Gastrocnemius medialis (tissue), 4 donors: ENCODE measurements at regions of chr3 and their contacts with region 1.

Region 1: DNA sequence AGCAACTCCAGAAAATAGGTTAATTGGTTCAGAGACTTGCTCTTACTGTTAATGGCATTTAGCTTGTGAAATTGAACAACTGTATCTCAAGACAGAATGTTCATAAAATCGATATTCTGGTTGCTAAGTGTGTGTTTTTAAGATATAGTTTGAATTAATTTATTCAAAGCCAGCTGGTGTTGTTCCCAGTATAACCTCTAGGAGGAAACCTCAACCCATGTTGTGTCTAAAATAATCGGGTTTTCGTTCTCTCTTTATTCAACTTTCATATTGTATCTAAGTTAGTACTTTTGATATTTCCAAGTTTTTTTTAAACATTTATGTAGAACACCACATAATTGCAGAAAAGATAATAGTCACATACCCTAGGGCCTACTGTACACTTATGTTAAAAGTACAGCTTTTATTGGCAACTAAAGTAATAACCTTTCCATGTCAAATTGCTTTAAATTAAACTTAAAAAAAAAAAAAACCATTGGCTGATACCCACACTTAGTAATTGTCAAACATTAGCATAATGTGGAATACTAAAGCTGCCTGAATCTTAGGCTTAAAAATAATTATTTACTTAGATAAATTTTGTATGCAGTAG is 90.9 kb downstream of the SAMMSON start:
- DNase-seq: no peak
- ATAC-seq: no peak
- H3K4me3 ChIP-seq: no peak overlapping the region
- H3K27ac ChIP-seq: no peak overlapping the region
- H3K4me1 ChIP-seq: no peaks in the 10 kb centered on the region
- H3K27me3 ChIP-seq: no peaks in the 10 kb centered on the region
- CTCF ChIP-seq: peak in 2 of 5 experiments; percentile 13 to 44
- POLR2A ChIP-seq: no peak

Region 2: GRCh38 chr3:70358978-70359580 is 268.7 kb after region 1 on chr3:
- in situ Hi-C with region 1: loop called in 1 of 4 experiments (anchors 25 kb)
- intact Hi-C with region 1: no loop called
- DNase-seq: no peak
- ATAC-seq: no peak
- H3K4me3 ChIP-seq: no peak overlapping the region
- H3K27ac ChIP-seq: no peak overlapping the region
- H3K4me1 ChIP-seq: no peaks in the 10 kb centered on the region
- H3K27me3 ChIP-seq: no peaks in the 10 kb centered on the region
- CTCF ChIP-seq: no peak
- POLR2A ChIP-seq: no peak